ENCODE measurements at regions of chr19 and their contacts with region 1.

Region 1: DNA sequence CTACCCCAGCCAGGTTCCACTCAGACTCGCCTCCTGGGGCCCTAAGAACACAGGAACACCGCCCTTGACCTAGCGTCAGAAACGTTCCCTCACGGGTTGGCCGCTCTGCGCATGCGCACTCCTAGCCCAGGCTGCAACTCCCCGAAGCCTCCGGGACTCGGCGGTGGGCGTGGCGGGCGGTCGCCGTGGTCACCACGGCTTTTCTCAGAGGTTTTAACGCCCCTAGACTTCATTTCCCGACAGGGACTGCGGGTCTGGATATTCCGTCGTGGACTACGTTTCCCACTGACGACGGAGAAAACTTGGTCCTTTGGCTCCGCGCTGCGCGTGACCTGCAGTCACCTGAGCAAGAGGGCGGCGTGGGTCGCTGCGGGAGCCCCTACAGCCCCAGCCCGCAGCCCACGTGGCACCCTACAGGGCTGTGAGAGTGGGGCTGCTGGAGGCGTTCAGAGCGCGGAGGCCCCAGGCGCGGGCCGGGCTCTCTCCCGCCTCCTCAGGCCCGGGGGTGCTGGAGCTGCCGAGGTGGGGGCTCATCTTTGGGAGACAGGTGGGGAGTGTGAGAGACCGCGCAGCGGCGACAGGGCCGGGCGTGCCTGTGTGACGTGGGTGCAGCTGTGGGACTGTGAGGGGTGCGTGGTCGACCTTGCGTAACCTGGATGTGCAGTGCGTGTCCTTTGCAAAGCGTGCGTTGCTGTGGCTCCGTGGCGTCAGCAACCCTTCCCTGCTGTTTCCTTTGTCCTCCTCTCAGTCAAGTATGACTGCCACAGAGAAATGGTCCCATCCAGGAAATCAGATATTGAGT is 38.0 kb upstream of the ZNF573 start:
- DNase-seq: peak; percentile 16
- H3K4me3 Mint-ChIP-seq: no peak overlapping the region
- H3K27ac Mint-ChIP-seq: no peak overlapping the region
- H3K4me1 Mint-ChIP-seq: no peaks in the 10 kb centered on the region
- H3K27me3 Mint-ChIP-seq: peaks cover 16% of the 10 kb centered on the region

Region 2: GRCh38 chr19:37803250-37803854 is 14.0 kb before region 1 on chr19:
- CTCF ChIA-PET with region 1: no interaction called
- POLR2A ChIA-PET with region 1: no interaction called
- intact Hi-C with region 1: loop called (anchors 1 kb)
- DNase-seq: no peak
- H3K4me3 Mint-ChIP-seq: no peak overlapping the region
- H3K27ac Mint-ChIP-seq: no peak overlapping the region
- H3K4me1 Mint-ChIP-seq: no peaks in the 10 kb centered on the region
- H3K27me3 Mint-ChIP-seq: no peaks in the 10 kb centered on the region

Region 3: DNA sequence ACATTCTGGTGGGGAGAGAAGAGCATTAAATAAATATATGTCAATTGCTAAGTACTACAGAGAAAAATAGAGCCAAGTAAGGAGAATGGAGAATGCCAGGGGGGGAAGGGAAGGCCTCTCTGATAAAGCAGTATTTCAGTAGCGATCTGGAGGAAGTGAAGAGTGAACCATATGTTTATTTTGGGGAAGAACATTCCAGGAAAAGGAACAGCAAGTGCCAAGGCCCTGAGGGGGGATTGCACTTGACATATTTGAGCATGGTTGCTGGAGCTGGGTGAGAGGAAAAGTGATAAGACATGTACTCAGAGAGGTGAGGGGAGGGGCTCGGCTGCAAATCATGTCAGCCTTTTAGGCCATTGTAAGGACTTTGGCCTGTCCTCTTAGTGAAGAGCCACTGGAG is 58.7 kb after region 1 on chr19:
- CTCF ChIA-PET with region 1: no interaction called
- POLR2A ChIA-PET with region 1: no interaction called
- intact Hi-C with region 1: no loop called
- DNase-seq: no peak
- H3K4me3 Mint-ChIP-seq: no peak overlapping the region
- H3K27ac Mint-ChIP-seq: no peak overlapping the region
- H3K4me1 Mint-ChIP-seq: no peaks in the 10 kb centered on the region
- H3K27me3 Mint-ChIP-seq: no peaks in the 10 kb centered on the region

Measured in activated CD4-positive, alpha-beta memory T cell treated with anti-CD3 and anti-CD28 coated beads for 36 hours (primary cell).